HEK293 (cell line): ENCODE measurements at regions of chr1 and their contacts with region 1.

Region 1: DNA sequence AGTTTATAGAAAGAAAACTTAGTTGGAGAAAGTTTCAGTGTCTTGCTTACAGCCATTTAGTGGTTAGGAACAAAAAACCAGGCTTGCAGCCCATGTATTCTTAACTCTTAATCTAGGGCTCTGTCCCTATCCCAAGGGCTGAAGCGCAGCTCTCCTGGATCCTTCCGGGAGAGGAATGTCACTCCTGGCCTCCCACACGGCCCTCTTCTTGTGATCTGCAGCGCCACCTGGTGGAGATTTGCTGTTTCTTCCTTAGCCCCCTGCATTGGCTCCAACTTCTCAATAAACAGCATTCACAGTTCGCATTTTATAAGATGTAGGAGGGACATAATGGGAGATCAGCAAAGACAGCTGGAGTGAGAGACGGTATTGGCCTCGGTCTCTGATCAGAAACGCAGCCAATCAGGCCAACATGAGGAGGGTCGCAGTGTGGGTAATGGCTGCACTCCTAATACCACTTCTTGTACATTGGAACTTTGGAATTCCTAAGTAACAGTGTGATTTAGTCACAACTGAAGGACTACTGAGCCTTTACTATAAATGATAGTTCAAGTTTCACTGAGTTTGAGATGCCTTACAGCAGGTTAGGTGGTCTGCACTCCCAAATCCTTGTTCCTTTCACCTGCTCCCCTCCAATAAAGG is 283.4 kb downstream of the ASTN1 start:
- H3K4me3 ChIP-seq: no peak overlapping the region
- H3K27ac ChIP-seq: no peak overlapping the region
- H3K4me1 ChIP-seq: no peaks in the 10 kb centered on the region
- CTCF ChIP-seq: peak; percentile 57; the same call in 1 of the 2 replicates

Region 2: DNA sequence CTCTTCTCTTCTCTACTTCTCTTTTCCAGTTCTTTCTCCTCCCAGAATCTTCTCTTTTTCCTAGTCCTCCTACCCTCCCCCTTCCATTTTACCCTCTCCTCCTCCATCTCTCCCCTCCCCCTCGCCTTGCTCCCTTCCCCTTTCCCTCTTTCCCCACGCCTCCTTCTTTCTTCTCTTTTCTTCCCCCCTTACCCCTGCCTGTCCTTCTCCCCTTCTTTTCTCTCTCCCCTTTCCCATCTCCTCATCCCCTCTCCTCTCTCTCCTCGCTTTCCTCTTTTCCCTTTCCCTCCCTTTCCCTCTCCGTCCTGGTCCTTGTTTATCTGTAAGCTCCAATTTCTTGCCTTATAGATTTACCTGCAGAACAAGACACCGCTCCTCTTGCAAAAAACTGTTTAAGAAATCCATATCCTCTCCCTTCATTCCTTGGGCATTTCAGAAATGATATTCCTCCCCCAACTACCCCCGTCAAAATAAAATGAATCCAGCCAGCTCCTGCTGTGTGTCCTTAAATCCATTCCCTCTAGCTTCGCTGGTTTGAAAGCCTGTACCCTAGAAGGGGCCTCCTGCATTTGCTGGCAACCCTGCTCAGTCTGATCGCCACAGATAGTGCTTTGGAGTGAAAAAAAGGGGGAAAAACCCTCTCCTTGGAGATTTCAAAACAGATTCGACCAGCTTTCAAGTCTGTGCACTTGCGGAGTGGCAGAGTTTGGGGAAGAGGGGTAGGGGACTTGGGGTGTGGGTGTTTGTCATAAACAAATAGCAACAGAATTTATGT is 328.7 kb before region 1 on chr1:
- CTCF ChIA-PET with region 1: no interaction called
- POLR2A ChIA-PET with region 1: no interaction called
- H3K4me3 ChIP-seq: no peak overlapping the region
- H3K27ac ChIP-seq: no peak overlapping the region
- H3K4me1 ChIP-seq: no peaks in the 10 kb centered on the region
- CTCF ChIP-seq: no peak

Region 3: GRCh38 chr1:176843352-176844297 is 37.5 kb before region 1 on chr1:
- CTCF ChIA-PET with region 1: interaction called, 16 read pairs
- POLR2A ChIA-PET with region 1: no interaction called
- H3K4me3 ChIP-seq: no peak overlapping the region
- H3K27ac ChIP-seq: no peak overlapping the region
- H3K4me1 ChIP-seq: no peaks in the 10 kb centered on the region
- CTCF ChIP-seq: peak; percentile 50; the same call in 1 of the 2 replicates

Region 4: DNA sequence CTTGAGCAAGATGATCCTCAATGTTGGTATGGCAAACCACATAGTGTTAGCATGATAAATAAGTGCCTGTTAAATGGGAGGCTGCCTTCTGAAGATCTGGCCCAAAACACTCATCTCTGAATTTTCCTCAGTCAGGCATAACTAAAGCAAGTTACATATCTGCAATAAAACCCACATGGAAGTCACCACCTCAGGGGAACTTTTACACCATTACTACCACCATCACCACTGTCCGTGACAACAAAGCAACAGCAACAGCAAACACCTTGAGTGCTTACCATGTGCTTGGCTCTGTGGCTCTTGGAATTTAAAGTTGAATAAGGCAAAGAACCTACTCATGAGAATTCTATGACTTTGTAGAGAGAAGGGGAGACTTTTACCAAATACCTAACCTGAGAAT is 50.5 kb after region 1 on chr1:
- CTCF ChIA-PET with region 1: no interaction called
- POLR2A ChIA-PET with region 1: no interaction called
- H3K4me3 ChIP-seq: no peak overlapping the region
- H3K27ac ChIP-seq: no peak overlapping the region
- H3K4me1 ChIP-seq: no peaks in the 10 kb centered on the region
- CTCF ChIP-seq: no peak